Common myeloid progenitor, CD34-positive (primary cell): ENCODE measurements at regions of chr5 and their contacts with region 1.

Region 1: DNA sequence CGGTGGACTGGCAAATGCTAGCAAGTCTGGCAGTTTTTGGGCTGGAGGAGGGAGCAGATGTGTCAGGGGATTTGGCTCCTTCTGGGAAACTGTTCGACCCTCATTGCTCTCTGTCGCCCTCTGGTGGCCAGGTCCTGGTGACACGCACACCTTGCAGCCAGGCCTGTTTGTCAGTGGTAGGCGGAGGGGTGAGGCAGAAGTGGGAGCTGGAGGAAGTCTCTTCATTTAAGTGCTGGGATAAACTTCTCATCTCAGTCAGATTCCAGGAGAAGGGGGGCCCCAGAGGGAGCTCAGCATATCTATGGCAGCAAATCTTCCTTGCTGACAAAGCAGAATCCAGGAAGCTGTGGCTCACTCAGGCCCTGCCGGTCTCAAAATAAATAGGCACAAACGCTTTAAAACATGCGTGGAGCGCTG is 326.5 kb downstream of the ZSWIM6 start:
- DNase-seq: peak; percentile 67 to 79 (median 71)
- H3K4me3 ChIP-seq: no peak overlapping the region
- H3K27ac ChIP-seq: no peak overlapping the region
- H3K4me1 ChIP-seq: no peaks in the 10 kb centered on the region
- H3K27me3 ChIP-seq: no peaks in the 10 kb centered on the region

Region 2: DNA sequence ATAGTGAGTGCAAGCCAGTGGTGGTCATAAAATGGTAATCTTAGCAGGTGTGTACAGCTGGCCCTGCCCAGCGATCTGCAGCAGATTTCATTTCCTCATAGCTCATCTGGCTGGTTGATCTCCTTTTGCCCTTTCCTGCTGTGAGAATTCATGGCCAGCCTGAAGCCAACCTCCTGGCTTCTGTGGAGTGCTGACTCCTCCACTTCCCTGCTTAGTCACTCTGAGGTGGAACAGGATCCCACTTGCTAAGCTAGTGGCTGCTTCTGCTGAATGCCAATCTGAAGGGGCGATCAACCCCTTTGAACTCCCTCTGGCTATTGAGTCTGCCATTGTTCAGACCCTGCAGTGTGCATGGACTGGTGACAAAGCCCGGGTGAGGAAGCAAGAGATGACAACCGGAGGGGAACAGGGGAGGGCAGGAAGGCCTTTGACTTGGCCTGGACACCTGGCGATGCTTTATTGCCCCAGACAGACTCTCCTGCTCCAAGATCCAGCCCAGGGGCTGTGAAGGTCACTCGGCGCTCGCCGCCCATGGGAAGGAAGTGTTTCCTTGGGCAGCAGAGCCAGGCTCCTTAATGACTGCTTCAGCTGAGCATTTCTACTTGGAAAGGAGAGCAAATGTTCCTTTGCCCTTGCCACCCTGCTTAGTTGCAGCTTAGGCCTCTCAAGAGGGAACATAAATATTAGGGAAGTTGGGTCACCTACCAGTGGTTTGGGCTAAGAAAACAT is 14.6 kb after region 1 on chr5:
- CTCF ChIA-PET with region 1: interaction called, 19 read pairs
- POLR2A ChIA-PET with region 1: interaction called, 3 read pairs
- DNase-seq: peak; percentile 43 to 86 (median 79)
- H3K4me3 ChIP-seq: peak overlapping the region in 1 of 7 experiments; percentile 2
- H3K27ac ChIP-seq: no peak overlapping the region
- H3K4me1 ChIP-seq: peaks cover 0 to 21% (median 16%) of the 10 kb centered on the region in 4 experiments
- H3K27me3 ChIP-seq: no peaks in the 10 kb centered on the region

Region 3: DNA sequence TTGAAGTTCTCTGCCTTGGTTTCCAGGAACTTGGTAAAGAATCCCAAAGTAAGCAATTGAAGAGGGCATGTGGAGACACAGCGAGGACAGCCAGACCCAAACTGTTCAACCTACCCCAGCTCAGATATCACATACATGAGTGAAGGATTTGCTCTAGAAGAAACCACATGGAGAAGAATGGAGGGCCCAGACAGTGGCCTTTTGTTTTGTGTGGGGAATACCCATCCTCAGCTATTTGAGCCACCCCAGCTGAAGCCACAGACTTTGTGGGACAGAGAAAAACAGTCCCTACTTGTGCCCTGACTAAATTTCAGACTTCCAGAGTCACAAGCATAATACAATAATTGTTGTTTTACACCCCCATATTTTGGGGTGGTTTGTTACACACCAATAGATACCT is 60.5 kb after region 1 on chr5:
- CTCF ChIA-PET with region 1: no interaction called
- POLR2A ChIA-PET with region 1: no interaction called
- DNase-seq: no peak
- H3K4me3 ChIP-seq: no peak overlapping the region
- H3K27ac ChIP-seq: no peak overlapping the region
- H3K4me1 ChIP-seq: no peaks in the 10 kb centered on the region
- H3K27me3 ChIP-seq: peaks cover 0 to 2% (median 0%) of the 10 kb centered on the region in 5 experiments